A673 (cell line): ENCODE measurements at regions of chr1 and their contacts with region 1.

Region 1: DNA sequence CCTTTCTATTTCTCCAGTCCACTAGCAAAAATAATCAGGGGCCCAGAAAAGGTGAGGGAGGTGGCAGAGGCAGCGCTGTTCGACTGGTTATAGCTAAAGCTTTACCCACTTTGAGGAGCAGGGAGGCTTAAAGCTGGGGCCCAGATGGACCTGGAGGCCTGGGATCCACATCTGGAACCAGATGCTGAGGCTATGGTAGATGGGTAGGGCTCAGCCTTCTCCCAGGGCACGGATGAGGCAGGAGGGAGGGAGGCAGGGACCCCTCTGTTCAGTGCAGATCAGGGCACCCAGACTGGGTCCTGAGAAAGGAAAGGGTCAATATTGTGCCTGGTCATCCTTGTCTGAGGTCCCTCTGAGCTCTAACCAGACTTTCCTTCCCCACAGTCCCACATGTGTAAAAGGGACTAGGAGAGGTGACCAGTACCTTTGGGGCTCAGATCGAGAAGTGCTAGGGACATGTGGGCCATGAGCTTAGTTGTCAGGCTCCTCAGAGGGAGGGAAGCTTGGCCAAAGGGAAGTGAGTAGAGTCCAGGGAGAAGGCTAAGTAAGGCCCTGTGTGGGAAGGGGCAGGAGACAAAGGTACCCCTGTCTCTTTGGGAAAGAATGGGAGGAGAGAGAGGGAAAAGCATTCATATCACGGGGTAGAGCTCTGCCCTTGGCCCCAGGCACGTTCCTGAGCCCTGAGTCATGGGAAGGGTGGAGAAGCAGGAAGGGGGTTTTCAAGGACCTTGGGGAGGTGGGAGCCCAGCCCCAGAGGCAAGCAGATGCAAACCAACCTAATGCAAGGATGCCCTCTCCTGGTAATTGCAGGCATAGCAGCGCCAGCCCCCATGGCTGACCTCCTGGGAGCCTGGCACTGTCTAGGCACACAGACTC is 15.4 kb downstream of the LMNA start:
- DNase-seq: peak; percentile 97
- H3K4me3 ChIP-seq: no peak overlapping the region
- H3K27ac ChIP-seq: peak overlapping the region; percentile 86
- H3K4me1 ChIP-seq: peaks cover 47% of the 10 kb centered on the region
- H3K27me3 ChIP-seq: no peaks in the 10 kb centered on the region
- CTCF ChIP-seq: peak; percentile 98

Region 2: DNA sequence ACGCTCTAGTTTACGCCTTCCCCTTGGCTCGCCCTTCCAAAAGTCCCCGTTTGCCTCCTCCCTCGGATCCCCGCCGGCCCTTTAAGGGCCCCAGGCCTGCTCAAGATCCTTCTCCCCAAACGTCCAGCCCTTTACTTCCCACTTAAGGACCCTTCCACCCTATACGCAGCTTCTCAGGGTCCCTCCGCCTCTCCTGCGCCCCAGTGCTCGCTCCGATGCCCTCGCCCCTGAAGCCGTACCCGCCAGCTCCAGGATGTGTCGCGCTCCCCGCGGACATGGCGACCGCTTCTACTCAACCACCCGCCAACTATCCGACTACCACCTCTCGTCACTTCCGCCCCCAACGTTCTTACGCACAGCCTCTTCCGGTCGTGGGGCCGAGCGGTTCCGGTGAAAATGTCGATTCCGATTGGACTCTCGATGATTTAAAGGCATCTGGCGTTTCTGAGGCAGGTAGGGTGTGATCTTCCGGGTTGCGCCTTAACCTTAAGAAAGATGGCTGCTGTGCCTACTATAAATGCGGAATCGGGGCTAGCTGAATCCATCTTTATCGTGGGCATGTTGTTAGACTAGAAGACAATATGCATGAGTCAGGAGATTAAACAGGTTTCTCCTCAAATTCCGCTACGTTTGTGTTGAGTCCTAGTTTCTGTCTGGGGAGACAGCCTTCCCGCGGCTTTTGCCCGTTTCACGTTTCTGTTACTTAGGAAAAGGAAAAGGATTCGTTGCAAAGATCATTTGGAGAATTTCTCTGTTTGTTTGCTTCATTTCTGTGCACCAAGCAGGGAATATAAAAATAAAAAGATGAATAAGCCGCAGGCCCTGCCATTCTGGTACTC is 195.6 kb before region 1 on chr1 and contains the start of gene KHDC4:
- CTCF ChIA-PET with region 1: interaction called, 4 read pairs
- POLR2A ChIA-PET with region 1: no interaction called
- intact Hi-C with region 1: loop called (anchors 2 kb)
- DNase-seq: peak; percentile 99
- H3K4me3 ChIP-seq: peak within 1 kb of the TSS; percentile 67
- H3K27ac ChIP-seq: peak within 1 kb of the TSS; percentile 90
- H3K4me1 ChIP-seq: peaks cover 35% of the 10 kb centered on the region
- H3K27me3 ChIP-seq: no peaks in the 10 kb centered on the region
- CTCF ChIP-seq: no peak
- total RNA-seq, gene KHDC4: 92.7 and 93.3 TPM in 2 replicates

Region 3: GRCh38 chr1:155946633-155947219 is 183.2 kb before region 1 on chr1:
- CTCF ChIA-PET with region 1: no interaction called
- POLR2A ChIA-PET with region 1: no interaction called
- intact Hi-C with region 1: no loop called
- DNase-seq: no peak
- H3K4me3 ChIP-seq: no peak overlapping the region
- H3K27ac ChIP-seq: no peak overlapping the region
- H3K4me1 ChIP-seq: peaks cover 2% of the 10 kb centered on the region
- H3K27me3 ChIP-seq: no peaks in the 10 kb centered on the region
- CTCF ChIP-seq: no peak

Region 4: DNA sequence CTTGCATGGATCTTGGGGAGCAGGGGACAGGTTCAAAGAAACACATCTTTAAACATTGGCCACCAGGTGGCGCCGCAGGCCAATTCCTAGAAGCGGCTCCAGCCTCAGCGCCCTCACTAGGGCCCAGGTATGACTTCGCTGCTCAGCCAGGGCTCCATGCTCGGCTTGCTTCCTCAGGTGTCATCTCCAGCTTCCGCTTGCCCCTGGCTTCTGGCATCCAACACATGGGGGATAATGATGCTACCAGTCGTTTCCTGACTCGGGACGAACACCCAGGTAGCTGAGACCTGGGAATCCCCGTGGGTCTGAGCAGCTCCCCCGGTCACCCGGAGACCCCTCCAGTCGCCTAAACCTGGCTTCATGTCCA is 39.1 kb before region 1 on chr1:
- CTCF ChIA-PET with region 1: interaction called, 56 read pairs
- POLR2A ChIA-PET with region 1: no interaction called
- intact Hi-C with region 1: loop called (anchors 1 kb)
- DNase-seq: peak; percentile 87
- H3K4me3 ChIP-seq: no peak overlapping the region
- H3K27ac ChIP-seq: no peak overlapping the region
- H3K4me1 ChIP-seq: peaks cover 16% of the 10 kb centered on the region
- H3K27me3 ChIP-seq: no peaks in the 10 kb centered on the region
- CTCF ChIP-seq: peak; percentile 86

Region 5: DNA sequence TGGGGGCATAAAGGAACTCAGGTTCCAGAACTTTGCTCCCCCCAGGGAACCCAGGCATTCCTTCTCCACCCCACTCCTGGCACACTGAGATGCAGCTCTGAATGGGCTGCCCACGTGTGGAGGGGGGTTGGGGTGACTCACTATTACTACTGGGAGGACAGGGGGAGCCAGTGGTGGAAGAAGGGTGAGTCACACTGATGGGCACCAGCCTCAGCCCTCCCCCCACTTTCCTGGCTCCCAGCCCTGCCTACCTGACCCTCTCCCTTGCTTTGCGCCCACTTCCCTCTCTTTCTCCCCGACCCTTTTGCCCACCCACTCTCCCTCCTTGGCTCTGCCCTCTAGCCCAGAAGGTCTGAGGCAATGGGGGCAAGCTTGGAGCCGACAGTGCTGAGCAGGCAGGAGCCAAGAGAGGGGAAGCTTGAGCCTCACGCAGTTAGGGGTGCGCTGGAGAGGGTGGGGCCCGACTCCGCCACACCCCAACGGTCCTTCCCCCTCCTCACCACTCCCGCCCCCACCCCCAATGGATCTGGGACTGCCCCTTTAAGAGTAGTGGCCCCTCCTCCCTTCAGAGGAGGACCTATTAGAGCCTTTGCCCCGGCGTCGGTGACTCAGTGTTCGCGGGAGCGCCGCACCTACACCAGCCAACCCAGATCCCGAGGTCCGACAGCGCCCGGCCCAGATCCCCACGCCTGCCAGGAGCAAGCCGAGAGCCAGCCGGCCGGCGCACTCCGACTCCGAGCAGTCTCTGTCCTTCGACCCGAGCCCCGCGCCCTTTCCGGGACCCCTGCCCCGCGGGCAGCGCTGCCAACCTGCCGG is 15.6 kb before region 1 on chr1 and contains the start of gene LMNA:
- CTCF ChIA-PET with region 1: interaction called, 6 read pairs
- POLR2A ChIA-PET with region 1: interaction called, 10 read pairs
- intact Hi-C with region 1: no loop called
- DNase-seq: peak; percentile 92
- H3K4me3 ChIP-seq: peak within 1 kb of the TSS; percentile 86
- H3K27ac ChIP-seq: peak within 1 kb of the TSS; percentile 74
- H3K4me1 ChIP-seq: peaks cover 36% of the 10 kb centered on the region
- H3K27me3 ChIP-seq: no peaks in the 10 kb centered on the region
- CTCF ChIP-seq: no peak
- total RNA-seq, gene LMNA: 204 and 225 TPM in 2 replicates

Region 6: DNA sequence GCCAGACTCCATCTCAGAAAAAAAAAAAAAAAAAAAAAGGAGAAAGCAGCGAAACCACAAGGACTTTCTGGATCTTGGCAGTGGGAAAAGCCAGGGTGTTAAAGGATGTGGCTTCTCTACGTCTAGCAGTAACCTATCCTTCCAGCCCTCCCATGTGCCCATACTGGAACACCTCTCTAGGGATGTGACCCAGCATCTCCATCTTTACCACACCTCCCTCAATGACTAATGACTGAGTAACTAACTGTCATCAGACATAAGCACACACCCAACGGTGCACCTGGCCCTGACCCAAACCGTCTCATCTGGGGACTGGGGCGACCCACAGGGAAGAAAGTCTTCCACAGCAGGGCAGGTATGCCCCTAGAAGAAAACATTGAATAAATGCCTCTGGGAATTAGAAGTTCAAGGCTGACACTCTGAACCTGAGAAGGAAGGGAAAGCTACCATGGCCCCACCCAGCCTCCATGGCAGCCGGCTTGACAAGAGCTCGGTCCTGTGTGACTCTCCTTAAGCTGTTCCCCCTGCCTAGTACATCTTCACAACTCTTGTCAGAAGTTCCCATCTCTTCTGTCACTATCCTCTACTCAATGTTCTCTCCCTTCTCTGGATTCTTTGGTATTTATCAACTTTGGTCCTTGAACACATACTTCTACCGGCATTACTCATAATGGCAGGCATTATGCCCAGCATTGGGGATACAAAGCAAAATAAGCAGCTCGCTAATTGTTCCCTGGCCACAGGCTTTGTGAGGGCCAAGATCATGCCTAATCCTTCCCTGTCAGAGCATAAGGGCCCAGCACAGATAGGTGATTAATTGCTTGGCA is 132.7 kb after region 1 on chr1:
- CTCF ChIA-PET with region 1: interaction called, 10 read pairs
- POLR2A ChIA-PET with region 1: no interaction called
- intact Hi-C with region 1: no loop called
- DNase-seq: no peak
- H3K4me3 ChIP-seq: no peak overlapping the region
- H3K27ac ChIP-seq: no peak overlapping the region
- H3K4me1 ChIP-seq: no peaks in the 10 kb centered on the region
- H3K27me3 ChIP-seq: no peaks in the 10 kb centered on the region
- CTCF ChIP-seq: no peak

Region 7: DNA sequence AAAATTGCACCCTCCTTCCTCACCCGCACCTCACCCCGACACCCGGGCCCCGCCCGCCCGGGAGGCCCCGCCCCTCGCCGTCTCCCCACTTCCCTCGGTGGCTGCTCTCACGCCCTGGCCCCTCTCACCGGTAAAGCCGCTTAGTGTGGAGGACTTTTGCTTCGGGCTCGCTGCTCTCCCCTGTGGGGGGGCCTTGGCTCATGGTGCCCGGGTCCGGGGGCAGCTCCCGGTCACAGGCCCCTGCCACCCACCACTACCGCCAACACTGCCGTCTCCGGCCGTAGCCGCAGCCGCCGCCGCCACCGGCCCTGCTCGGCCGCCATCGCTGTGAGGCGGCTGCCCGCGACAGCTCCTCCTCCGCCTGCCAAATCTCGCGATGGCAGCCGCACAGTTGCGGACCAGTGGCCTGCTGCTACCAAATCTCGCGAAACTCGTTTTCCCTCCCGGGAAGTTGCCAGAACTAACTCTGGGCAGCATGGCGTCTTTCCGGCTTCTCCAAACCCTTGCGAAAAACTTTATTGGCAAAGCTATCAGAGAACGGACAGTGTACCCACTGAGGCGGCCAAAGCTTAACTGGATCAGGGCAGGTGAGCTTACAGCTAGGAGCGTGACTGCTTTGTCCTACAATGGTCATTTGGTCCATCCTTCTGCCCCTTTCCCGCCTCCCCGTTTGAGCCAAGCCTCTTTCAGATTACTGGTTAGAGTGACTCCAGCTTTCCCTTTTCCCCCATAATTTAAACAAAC is 152.7 kb after region 1 on chr1 and contains the start of gene SMG5:
- CTCF ChIA-PET with region 1: no interaction called
- POLR2A ChIA-PET with region 1: no interaction called
- intact Hi-C with region 1: no loop called
- DNase-seq: peak; percentile 99
- H3K4me3 ChIP-seq: peak within 1 kb of the TSS; percentile 81
- H3K27ac ChIP-seq: peak within 1 kb of the TSS; percentile 97
- H3K4me1 ChIP-seq: peaks cover 8% of the 10 kb centered on the region
- H3K27me3 ChIP-seq: no peaks in the 10 kb centered on the region
- CTCF ChIP-seq: no peak
- total RNA-seq, gene SMG5: 107 and 129 TPM in 2 replicates